Calu3 (cell line): ENCODE measurements at regions of chr19 and their contacts with region 1.

Region 1: GRCh38 chr19:9075064-9075949 is 11.6 kb upstream of the OR1M1 start:
- DNase-seq: peak; percentile 91
- H3K4me3 Mint-ChIP-seq: no peak overlapping the region
- H3K27ac Mint-ChIP-seq: peak overlapping the region; percentile 86
- H3K4me1 Mint-ChIP-seq: peaks cover 12% of the 10 kb centered on the region
- H3K27me3 Mint-ChIP-seq: no peaks in the 10 kb centered on the region
- CTCF ChIP-seq: no peak

Region 2: GRCh38 chr19:8654591-8655339 is 420.5 kb before region 1 on chr19:
- CTCF ChIA-PET with region 1: interaction called, 3 read pairs
- intact Hi-C with region 1: loop called (anchors 2 kb)
- DNase-seq: peak; percentile 60
- H3K4me3 Mint-ChIP-seq: no peak overlapping the region
- H3K27ac Mint-ChIP-seq: no peak overlapping the region
- H3K4me1 Mint-ChIP-seq: peaks cover 8% of the 10 kb centered on the region
- H3K27me3 Mint-ChIP-seq: peaks cover 66% of the 10 kb centered on the region
- CTCF ChIP-seq: peak; percentile 76

Region 3: GRCh38 chr19:9009935-9010651 is 65.2 kb before region 1 on chr19 and contains the start of gene MUC16:
- CTCF ChIA-PET with region 1: no interaction called
- intact Hi-C with region 1: loop called (anchors 10 kb)
- DNase-seq: peak; percentile 11
- H3K4me3 Mint-ChIP-seq: no peak within 1 kb of the TSS
- H3K27ac Mint-ChIP-seq: no peak within 1 kb of the TSS
- H3K4me1 Mint-ChIP-seq: no peaks in the 10 kb centered on the region
- H3K27me3 Mint-ChIP-seq: no peaks in the 10 kb centered on the region
- CTCF ChIP-seq: no peak
- total RNA-seq, gene MUC16: 0.15 and 0.17 TPM in 2 replicates

Region 4: GRCh38 chr19:9054765-9055164 is 20.5 kb before region 1 on chr19:
- CTCF ChIA-PET with region 1: interaction called, 11 read pairs
- intact Hi-C with region 1: loop called (anchors 2 kb)
- DNase-seq: peak; percentile 24
- H3K4me3 Mint-ChIP-seq: peak overlapping the region; percentile 37
- H3K27ac Mint-ChIP-seq: peak overlapping the region; percentile 83
- H3K4me1 Mint-ChIP-seq: peaks cover 18% of the 10 kb centered on the region
- H3K27me3 Mint-ChIP-seq: no peaks in the 10 kb centered on the region
- CTCF ChIP-seq: no peak

Region 5: GRCh38 chr19:9116547-9116946 is 41.2 kb after region 1 on chr19:
- CTCF ChIA-PET with region 1: no interaction called
- intact Hi-C with region 1: no loop called
- DNase-seq: no peak
- H3K4me3 Mint-ChIP-seq: no peak overlapping the region
- H3K27ac Mint-ChIP-seq: no peak overlapping the region
- H3K4me1 Mint-ChIP-seq: no peaks in the 10 kb centered on the region
- H3K27me3 Mint-ChIP-seq: no peaks in the 10 kb centered on the region
- CTCF ChIP-seq: no peak